ENCODE measurements at regions of chr7 and their contacts with region 1.

Region 1: GRCh38 chr7:101390901-101391301 is 28.2 kb downstream of the COL26A1 start:
- DNase-seq: no peak
- H3K4me3 ChIP-seq: no peak overlapping the region
- H3K27ac ChIP-seq: peak overlapping the region; percentile 21; the same call in 1 of the 2 replicates
- H3K4me1 ChIP-seq: peaks cover 11 to 24% (median 17%) of the 10 kb centered on the region in 4 experiments
- H3K27me3 ChIP-seq: no peaks in the 10 kb centered on the region
- CTCF ChIP-seq: no peak
- EP300 ChIP-seq: no peak
- POLR2A ChIP-seq: no peak
- RAD21 ChIP-seq: no peak

Region 2: DNA sequence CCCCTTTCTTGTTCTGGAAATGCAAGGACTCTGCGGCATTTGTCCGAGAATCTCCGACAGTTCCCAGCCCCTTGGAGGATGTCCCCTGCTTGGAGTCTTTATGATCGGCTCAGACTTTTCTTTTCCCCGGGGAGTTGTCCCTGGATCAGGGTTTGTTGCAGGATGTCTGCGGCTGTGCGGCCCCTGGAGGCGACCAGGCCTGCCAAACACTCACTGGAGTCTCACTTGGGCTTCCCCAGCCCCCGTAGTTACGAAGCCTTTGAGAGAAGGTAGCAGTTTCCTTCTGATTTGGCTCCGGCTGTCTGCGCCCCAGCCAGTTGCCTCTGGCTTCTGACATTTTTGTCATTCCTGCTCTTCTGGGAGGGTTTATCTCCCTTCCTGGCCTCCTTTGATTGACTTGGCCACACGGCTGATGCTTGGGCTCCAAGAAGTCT is 12.1 kb before region 1 on chr7:
- CTCF ChIA-PET with region 1: interaction called, 728 read pairs
- POLR2A ChIA-PET with region 1: interaction called, 16 read pairs
- DNase-seq: peak in 1 of 2 experiments; percentile 70
- H3K4me3 ChIP-seq: no peak overlapping the region
- H3K27ac ChIP-seq: no peak overlapping the region
- H3K4me1 ChIP-seq: peaks cover 0 to 11% (median 7%) of the 10 kb centered on the region in 4 experiments; a peak in 5 of 7 replicates
- H3K27me3 ChIP-seq: no peaks in the 10 kb centered on the region
- CTCF ChIP-seq: peak in 2 of 3 experiments; percentile 8 to 18; a peak in 2 of 4 replicates
- EP300 ChIP-seq: no peak; a peak in 1 of 3 replicates
- POLR2A ChIP-seq: no peak
- RAD21 ChIP-seq: peak; percentile 6 to 14; a peak in 2 of 4 replicates

Region 3: DNA sequence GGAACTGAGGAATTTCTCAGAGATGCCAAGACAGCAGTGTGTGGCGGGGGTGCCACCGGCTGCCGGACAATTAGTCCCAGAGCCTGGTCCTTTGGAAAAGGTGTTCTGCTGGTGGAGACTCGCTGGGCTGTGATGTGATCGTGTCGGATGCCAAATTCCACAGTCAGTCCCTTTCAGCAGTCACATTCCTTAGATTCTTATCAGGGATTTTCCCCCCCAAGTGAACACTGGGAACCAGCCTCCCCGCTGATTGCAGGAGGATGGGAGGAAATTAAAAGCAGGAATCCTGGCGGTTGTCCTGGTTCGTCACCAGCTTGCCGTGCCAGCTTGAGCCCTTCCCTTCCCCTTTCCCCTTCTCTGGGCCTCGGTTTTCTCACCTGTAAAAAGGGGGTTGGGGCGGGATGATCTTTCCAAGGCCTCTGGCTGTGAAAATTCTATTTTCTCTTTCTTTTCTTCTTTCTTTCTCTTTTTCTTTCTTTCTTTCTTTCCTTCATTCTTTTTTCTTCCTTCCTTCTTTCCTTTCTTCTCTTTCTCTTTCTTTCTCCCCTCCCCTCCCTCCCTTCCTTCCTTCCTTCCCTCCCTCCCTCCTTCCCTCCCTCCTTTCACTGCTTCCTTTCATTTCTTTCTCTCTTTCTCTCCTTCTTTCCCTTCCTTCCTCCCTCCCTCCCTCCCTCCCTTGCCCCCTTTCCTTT is 11.3 kb after region 1 on chr7:
- CTCF ChIA-PET with region 1: interaction called, 728 read pairs
- POLR2A ChIA-PET with region 1: interaction called, 15 read pairs
- DNase-seq: peak; percentile 79
- H3K4me3 ChIP-seq: peak overlapping the region in 2 of 4 experiments; percentile 8 to 37; a peak in 4 of 8 replicates
- H3K27ac ChIP-seq: peak overlapping the region; percentile 66
- H3K4me1 ChIP-seq: peaks cover 12 to 25% (median 15%) of the 10 kb centered on the region in 4 experiments
- H3K27me3 ChIP-seq: no peaks in the 10 kb centered on the region
- CTCF ChIP-seq: no peak
- EP300 ChIP-seq: peak in 1 of 2 experiments; percentile 88; a peak in 1 of 3 replicates
- POLR2A ChIP-seq: no peak
- RAD21 ChIP-seq: no peak

Region 4: GRCh38 chr7:101586078-101586905 is 195.4 kb after region 1 on chr7:
- CTCF ChIA-PET with region 1: no interaction called
- POLR2A ChIA-PET with region 1: no interaction called
- DNase-seq: peak in 1 of 2 experiments; percentile 60
- H3K4me3 ChIP-seq: no peak overlapping the region
- H3K27ac ChIP-seq: no peak overlapping the region
- H3K4me1 ChIP-seq: no peaks in the 10 kb centered on the region
- H3K27me3 ChIP-seq: no peaks in the 10 kb centered on the region; a peak in 1 of 7 replicates
- CTCF ChIP-seq: no peak
- EP300 ChIP-seq: no peak
- POLR2A ChIP-seq: no peak
- RAD21 ChIP-seq: 0 out of 4 replicates have a peak, but pooled peaks of 1 of the 2 experiments have one; percentile 14

Measured in H1 (cell line).